SK-N-SH (cell line): ENCODE measurements at regions of chr3 and their contacts with region 1.

Region 1: DNA sequence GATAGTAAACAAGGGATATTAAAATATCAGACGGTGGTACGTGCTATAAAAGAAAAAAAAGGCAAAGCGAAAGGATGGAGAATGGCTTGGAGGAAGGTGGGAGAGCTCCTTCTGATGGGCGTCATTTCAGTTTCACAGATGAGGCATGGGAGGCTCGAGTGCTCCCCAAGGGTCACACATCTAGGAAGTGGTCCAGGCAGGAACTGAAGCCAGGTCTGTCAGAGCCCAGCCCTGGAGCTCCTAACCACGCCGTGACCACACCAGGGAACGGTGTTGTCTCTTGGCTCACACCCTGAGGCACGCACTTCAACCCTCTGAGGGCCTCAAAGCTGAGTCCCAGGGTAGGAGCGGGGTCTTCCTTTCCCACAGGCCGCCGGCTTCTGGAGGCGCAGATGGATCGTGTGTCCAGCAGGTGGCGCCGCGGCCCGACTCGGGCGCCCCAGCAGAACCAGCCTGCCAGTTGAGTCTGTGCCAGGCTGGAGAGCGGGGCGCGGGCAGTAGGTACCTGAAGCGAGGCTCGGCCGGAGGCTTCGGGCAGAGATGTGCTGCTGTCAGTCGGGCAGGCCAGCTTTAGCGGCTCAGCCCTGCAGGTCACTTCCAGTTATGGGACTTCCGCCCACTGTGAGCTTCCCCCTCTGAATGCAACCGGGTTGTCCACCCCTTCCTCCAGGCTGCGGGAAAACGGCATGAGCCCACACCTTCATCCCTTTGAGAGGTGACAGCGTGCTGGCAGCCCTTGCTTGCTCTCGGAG is 68.1 kb downstream of the SLC6A1 start:
- DNase-seq: peak; percentile 89
- H3K4me3 ChIP-seq: peak overlapping the region; percentile 51 to 88
- H3K27ac ChIP-seq: peak overlapping the region in 1 of 2 experiments; percentile 37; a peak in 1 of 4 replicates
- H3K4me1 ChIP-seq: peaks cover 0 to 9% of the 10 kb centered on the region in 2 experiments; a peak in 1 of 4 replicates
- H3K27me3 ChIP-seq: no peaks in the 10 kb centered on the region
- CTCF ChIP-seq: peak; percentile 87
- EP300 ChIP-seq: no peak
- RAD21 ChIP-seq: peak; percentile 79

Region 2: DNA sequence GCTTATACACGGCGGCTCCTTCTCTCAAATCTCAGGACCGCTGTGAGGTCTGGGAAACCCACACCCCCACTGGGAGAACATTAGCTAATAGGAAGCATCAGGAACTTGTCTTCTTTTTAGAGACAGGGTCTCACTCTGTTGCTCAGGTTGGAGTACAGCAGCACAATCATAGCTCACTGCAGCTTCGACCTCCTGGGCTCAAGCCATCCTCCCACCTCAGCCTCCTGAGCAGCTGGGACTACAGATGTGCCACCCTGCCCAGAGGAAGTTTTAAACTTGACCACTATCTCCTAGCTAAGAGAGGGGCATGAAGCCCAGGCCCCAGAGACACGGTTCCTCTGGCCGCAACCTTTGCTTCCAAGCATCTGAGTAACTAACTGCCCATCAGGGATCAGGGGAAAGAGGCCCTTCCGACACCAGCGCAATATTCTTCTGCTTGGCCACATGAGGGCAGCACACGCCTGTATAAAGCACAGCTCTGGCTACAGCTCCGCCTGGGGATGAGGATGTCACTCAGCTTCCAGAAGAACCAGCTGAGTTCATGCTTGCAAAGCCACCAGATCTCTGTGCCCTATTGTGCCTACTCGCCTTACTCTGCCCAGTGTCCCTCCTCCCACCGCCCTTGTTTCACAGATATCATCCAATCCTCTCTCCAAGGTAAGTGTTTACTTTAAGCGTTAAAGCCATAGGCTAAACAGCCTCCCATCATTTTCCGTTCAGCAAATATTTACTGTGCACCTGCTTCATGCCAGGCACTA is 302.2 kb before region 1 on chr3:
- CTCF ChIA-PET with region 1: interaction called, 152 read pairs
- POLR2A ChIA-PET with region 1: no interaction called
- DNase-seq: peak; percentile 86
- H3K4me3 ChIP-seq: no peak overlapping the region
- H3K27ac ChIP-seq: no peak overlapping the region
- H3K4me1 ChIP-seq: no peaks in the 10 kb centered on the region; a peak in 1 of 4 replicates
- H3K27me3 ChIP-seq: no peaks in the 10 kb centered on the region
- CTCF ChIP-seq: peak; percentile 67
- EP300 ChIP-seq: no peak
- RAD21 ChIP-seq: peak; percentile 94

Region 3: DNA sequence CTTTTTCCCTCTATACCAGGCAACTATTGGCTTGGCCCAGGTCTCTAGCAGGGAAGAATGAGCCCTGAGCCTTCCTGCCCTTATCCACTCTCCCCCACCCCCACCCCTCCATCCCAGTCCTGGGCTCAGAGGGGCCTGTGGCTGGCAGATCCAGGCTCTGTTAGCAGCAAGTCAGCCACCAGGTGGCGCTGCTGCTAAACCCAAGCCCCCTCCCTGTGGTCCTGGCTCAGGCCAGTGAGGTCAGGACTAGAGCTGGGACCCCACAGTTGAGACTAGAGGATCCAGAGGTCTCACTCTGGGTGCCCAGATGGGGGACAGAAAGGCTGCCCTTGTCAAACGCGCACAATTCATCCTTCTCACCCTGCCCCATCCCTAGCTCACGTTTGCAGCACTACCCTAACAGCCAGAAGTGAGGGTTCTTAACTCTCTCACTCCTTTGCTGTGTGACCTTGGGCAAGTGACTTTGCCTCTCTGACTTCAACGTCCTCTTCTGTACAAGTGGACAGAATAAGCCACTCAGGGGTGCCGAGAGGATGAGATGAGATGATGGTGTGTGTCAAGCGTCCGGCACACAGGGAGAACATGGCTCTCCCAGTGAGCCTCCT is 114.9 kb before region 1 on chr3:
- CTCF ChIA-PET with region 1: interaction called, 281 read pairs
- POLR2A ChIA-PET with region 1: interaction called, 6 read pairs
- DNase-seq: peak; percentile 92
- H3K4me3 ChIP-seq: peak overlapping the region in 1 of 2 experiments; percentile 42; a peak in 1 of 4 replicates
- H3K27ac ChIP-seq: no peak overlapping the region
- H3K4me1 ChIP-seq: peaks cover 0 to 2% of the 10 kb centered on the region in 2 experiments; a peak in 1 of 4 replicates
- H3K27me3 ChIP-seq: no peaks in the 10 kb centered on the region
- CTCF ChIP-seq: peak; percentile 80
- EP300 ChIP-seq: no peak
- RAD21 ChIP-seq: peak; percentile 76

Region 4: GRCh38 chr3:10983219-10983916 is 77.3 kb before region 1 on chr3:
- CTCF ChIA-PET with region 1: interaction called, 37 read pairs
- POLR2A ChIA-PET with region 1: no interaction called
- DNase-seq: peak; percentile 78
- H3K4me3 ChIP-seq: no peak overlapping the region
- H3K27ac ChIP-seq: no peak overlapping the region
- H3K4me1 ChIP-seq: no peaks in the 10 kb centered on the region
- H3K27me3 ChIP-seq: no peaks in the 10 kb centered on the region
- CTCF ChIP-seq: peak; percentile 80
- EP300 ChIP-seq: no peak
- RAD21 ChIP-seq: peak; percentile 62

Region 5: DNA sequence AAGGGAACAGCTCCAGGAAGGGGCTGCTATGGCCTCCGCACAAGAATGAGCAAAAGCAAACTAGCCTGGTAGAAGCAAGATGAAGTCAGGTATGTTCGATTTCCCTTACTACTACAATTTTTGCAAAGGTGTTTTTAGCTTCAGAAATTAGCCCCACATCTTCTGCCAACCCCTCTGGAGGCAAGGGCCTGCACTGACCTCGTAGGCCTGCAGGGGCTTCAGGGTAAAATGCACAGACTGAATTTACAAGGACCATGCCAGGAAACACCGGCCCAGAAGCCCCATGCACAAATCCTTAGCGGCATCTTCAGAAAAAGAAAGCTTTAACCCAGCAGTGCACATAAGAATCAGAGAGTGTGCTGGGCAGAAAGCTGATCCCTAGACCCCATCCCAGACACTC is 15.1 kb before region 1 on chr3:
- CTCF ChIA-PET with region 1: interaction called, 74 read pairs
- POLR2A ChIA-PET with region 1: no interaction called
- DNase-seq: no peak
- H3K4me3 ChIP-seq: no peak overlapping the region
- H3K27ac ChIP-seq: no peak overlapping the region
- H3K4me1 ChIP-seq: no peaks in the 10 kb centered on the region
- H3K27me3 ChIP-seq: 0 out of 2 replicates have a peak, but pooled peaks cover 19% of the 10 kb centered on the region
- CTCF ChIP-seq: no peak
- EP300 ChIP-seq: no peak
- RAD21 ChIP-seq: no peak

Region 6: GRCh38 chr3:11155341-11156025 is 94.8 kb after region 1 on chr3:
- CTCF ChIA-PET with region 1: interaction called, 61 read pairs
- POLR2A ChIA-PET with region 1: no interaction called
- DNase-seq: peak; percentile 86
- H3K4me3 ChIP-seq: peak overlapping the region; percentile 71 to 86
- H3K27ac ChIP-seq: peak overlapping the region in 1 of 2 experiments; percentile 85; a peak in 2 of 4 replicates
- H3K4me1 ChIP-seq: peaks cover 7 to 15% of the 10 kb centered on the region in 2 experiments; a peak in 3 of 4 replicates
- H3K27me3 ChIP-seq: no peaks in the 10 kb centered on the region
- CTCF ChIP-seq: peak; percentile 85
- EP300 ChIP-seq: no peak
- RAD21 ChIP-seq: peak; percentile 81

Region 7: DNA sequence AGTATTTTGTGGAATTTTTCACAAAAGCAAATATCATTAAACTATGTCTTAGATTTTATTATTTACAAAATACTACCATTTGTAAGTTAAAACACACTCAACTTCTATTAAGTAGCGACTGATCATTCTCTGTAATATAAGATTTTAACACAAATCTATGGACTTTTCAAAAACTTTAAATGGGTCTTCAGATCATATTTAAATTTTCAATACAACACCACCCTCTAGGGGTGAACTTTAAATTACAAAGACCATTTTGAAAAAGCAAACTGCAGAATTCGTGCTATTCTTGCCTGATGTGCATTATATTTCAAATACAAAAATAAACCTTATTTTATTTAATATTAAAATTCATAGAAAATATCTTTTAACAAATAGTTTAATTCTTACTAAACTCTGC is 591.2 kb after region 1 on chr3:
- CTCF ChIA-PET with region 1: interaction called, 11 read pairs
- POLR2A ChIA-PET with region 1: no interaction called
- DNase-seq: peak; percentile 43
- H3K4me3 ChIP-seq: no peak overlapping the region
- H3K27ac ChIP-seq: no peak overlapping the region
- H3K4me1 ChIP-seq: peaks cover 0 to 2% of the 10 kb centered on the region in 2 experiments; a peak in 2 of 4 replicates
- H3K27me3 ChIP-seq: no peaks in the 10 kb centered on the region
- CTCF ChIP-seq: peak; percentile 64
- EP300 ChIP-seq: no peak
- RAD21 ChIP-seq: peak; percentile 72